Gastrocnemius medialis (tissue), 4 donors: ENCODE measurements at regions of chr4 and their contacts with region 1.

Region 1: DNA sequence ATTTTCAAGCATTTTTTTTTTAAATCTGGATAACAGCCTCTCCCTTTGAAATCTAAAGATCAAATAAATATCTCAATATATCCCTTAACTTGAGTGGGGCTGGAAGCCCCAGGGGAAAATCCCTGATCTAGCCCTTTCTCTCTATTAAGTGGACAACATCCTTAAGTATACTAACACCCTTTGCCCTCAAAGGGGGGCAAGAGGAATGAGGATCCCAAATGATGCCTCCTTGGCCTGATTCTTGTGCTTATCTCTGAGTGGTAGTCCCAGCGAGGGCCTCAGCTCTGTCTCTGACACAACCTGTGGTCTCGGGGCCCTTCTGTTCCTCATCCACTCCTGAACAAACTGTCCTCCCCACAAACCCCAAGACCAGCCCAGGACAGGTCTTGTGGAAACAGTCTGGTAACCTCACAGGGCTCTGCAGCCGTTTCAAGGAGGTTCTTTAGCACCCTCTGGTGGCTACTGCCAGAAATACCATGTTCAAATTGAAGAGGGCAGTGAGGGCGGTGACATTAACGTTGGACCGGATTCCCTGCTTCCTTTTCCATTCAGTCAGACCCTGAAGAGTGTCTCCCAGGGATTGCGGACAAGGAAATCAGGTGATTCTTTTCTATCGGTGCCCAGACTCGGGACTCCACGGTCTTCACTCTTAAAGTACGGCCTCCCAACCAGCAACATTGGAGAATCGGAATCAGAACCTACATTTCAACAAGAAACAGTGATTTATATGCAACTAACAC is 12.9 kb downstream of the CXCL13 start:
- DNase-seq: peak; percentile 32 to 45
- ATAC-seq: peak; percentile 91 to 93
- H3K4me3 ChIP-seq: peak overlapping the region in 1 of 4 donors; percentile 13
- H3K27ac ChIP-seq: no peak overlapping the region
- H3K4me1 ChIP-seq: no peaks in the 10 kb centered on the region
- H3K27me3 ChIP-seq: no peaks in the 10 kb centered on the region
- CTCF ChIP-seq: peak; percentile 40 to 77 (median 64)
- POLR2A ChIP-seq: no peak

Region 2: DNA sequence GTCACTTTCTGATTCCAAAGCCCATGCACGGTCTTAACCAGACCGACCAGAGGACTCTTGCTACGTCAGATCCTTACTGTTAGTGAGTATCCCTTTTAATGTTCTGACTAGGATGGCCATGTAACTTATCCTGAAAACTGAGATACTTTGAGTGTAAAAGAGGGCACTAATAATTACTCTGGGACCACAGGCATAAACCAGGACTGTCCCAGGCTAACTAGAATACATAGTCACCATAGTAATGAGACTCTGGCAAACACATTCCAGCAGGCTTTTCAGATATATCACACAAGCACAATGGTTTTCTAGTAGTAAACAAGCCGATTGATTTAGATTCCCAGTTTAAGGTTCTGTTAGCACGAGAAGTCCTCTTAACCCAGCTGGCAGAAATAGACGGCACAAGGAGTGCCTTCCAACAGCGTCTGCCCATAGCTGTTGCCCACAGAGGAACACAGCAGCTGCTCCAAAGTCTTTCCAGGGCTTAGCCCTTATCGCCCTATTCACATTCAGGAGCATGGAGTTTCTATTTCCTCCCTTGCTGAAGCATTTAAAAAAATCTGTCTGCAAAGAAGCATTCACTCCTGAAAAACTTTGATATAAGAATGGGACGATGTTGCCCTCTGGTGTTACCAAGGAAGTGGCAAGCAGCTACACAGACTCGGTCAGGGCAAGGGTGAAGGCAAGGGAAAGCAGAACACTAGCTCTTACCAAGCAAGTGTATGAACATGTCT is 79.5 kb after region 1 on chr4:
- in situ Hi-C with region 1: no loop called
- intact Hi-C with region 1: loop called (anchors 5 kb)
- DNase-seq: peak; percentile 14 to 53
- ATAC-seq: peak; percentile 83 to 93
- H3K4me3 ChIP-seq: peak overlapping the region; percentile 20 to 35 (median 24)
- H3K27ac ChIP-seq: peak overlapping the region; percentile 51 to 81 (median 58)
- H3K4me1 ChIP-seq: peaks cover 7 to 34% of the 10 kb centered on the region in 2 donors
- H3K27me3 ChIP-seq: no peaks in the 10 kb centered on the region
- CTCF ChIP-seq: peak in 3 of 5 experiments; percentile 4 to 30 (median 27)
- POLR2A ChIP-seq: no peak

Region 3: GRCh38 chr4:77734928-77735327 is 116.4 kb after region 1 on chr4:
- in situ Hi-C with region 1: no loop called
- intact Hi-C with region 1: no loop called
- DNase-seq: no peak
- ATAC-seq: no peak
- H3K4me3 ChIP-seq: no peak overlapping the region
- H3K27ac ChIP-seq: no peak overlapping the region
- H3K4me1 ChIP-seq: peaks cover 0 to 5% of the 10 kb centered on the region in 2 donors
- H3K27me3 ChIP-seq: no peaks in the 10 kb centered on the region
- CTCF ChIP-seq: no peak
- POLR2A ChIP-seq: no peak